ENCODE measurements at regions of chr12 and their contacts with region 1.

Region 1: GRCh38 chr12:89019408-89020120 is 332.7 kb downstream of the DUSP6 start:
- DNase-seq: peak; percentile 86
- H3K4me3 Mint-ChIP-seq: no peak overlapping the region
- H3K27ac Mint-ChIP-seq: no peak overlapping the region
- H3K4me1 Mint-ChIP-seq: peaks cover 6% of the 10 kb centered on the region
- H3K27me3 Mint-ChIP-seq: peaks cover 3% of the 10 kb centered on the region

Region 2: GRCh38 chr12:89033062-89033461 is 13.5 kb after region 1 on chr12:
- CTCF ChIA-PET with region 1: interaction called, 41 read pairs
- intact Hi-C with region 1: no loop called
- DNase-seq: no peak
- H3K4me3 Mint-ChIP-seq: no peak overlapping the region
- H3K27ac Mint-ChIP-seq: no peak overlapping the region
- H3K4me1 Mint-ChIP-seq: peaks cover 5% of the 10 kb centered on the region
- H3K27me3 Mint-ChIP-seq: peaks cover 3% of the 10 kb centered on the region

Region 3: GRCh38 chr12:89244536-89244935 is 225.0 kb after region 1 on chr12:
- CTCF ChIA-PET with region 1: interaction called, 3 read pairs
- intact Hi-C with region 1: loop called (anchors 1 kb)
- DNase-seq: peak; percentile 57
- H3K4me3 Mint-ChIP-seq: peak overlapping the region; percentile 36
- H3K27ac Mint-ChIP-seq: peak overlapping the region; percentile 73
- H3K4me1 Mint-ChIP-seq: peaks cover 33% of the 10 kb centered on the region
- H3K27me3 Mint-ChIP-seq: no peaks in the 10 kb centered on the region

Region 4: GRCh38 chr12:89494411-89495231 is 475.1 kb after region 1 on chr12:
- CTCF ChIA-PET with region 1: interaction called, 3 read pairs
- intact Hi-C with region 1: loop called (anchors 1 kb)
- DNase-seq: peak; percentile 73
- H3K4me3 Mint-ChIP-seq: peak overlapping the region; percentile 5
- H3K27ac Mint-ChIP-seq: peak overlapping the region; percentile 77
- H3K4me1 Mint-ChIP-seq: peaks cover 17% of the 10 kb centered on the region
- H3K27me3 Mint-ChIP-seq: no peaks in the 10 kb centered on the region

Region 5: GRCh38 chr12:89709157-89709994 is 689.8 kb after region 1 on chr12:
- CTCF ChIA-PET with region 1: no interaction called
- intact Hi-C with region 1: loop called (anchors 2 kb)
- DNase-seq: peak; percentile 99
- H3K4me3 Mint-ChIP-seq: peak overlapping the region; percentile 79
- H3K27ac Mint-ChIP-seq: peak overlapping the region; percentile 71
- H3K4me1 Mint-ChIP-seq: peaks cover 32% of the 10 kb centered on the region
- H3K27me3 Mint-ChIP-seq: no peaks in the 10 kb centered on the region

Region 6: DNA sequence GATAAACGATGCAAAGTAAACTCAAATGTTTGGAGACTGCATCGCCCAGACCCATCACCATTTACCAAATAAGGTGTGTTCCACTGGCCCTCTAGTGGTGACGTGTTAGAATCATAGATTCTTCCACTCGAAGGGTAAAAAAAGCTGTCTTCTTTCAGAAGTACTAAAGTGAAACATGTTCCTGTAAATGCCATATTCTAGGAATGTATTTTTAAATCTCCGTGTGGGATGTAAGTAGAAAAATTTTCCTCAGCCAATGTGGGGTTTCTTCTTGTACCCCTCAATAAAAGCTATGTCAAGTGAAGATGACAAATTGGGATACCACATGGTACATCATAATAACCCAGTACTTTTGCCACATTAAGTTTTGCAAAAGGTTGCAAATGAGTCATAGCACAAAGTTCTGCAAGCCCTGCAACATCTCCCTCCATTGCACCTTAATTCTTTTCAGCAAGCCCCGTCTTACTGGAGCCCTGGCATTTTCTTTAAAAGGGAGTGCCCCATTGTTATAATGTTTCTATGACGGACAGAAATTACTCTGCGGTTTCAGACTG is 1834.6 kb after region 1 on chr12:
- CTCF ChIA-PET with region 1: no interaction called
- intact Hi-C with region 1: loop called (anchors 10 kb)
- DNase-seq: peak; percentile 16
- H3K4me3 Mint-ChIP-seq: no peak overlapping the region
- H3K27ac Mint-ChIP-seq: no peak overlapping the region
- H3K4me1 Mint-ChIP-seq: no peaks in the 10 kb centered on the region
- H3K27me3 Mint-ChIP-seq: no peaks in the 10 kb centered on the region